B cell (primary cell): ENCODE measurements at regions of chr1 and their contacts with region 1.

Region 1: GRCh38 chr1:95723346-95723745 is 489.3 kb downstream of the RWDD3 start:
- DNase-seq: no peak
- ATAC-seq: no peak
- H3K4me3 ChIP-seq: no peak overlapping the region
- H3K4me3 Mint-ChIP-seq: no peak overlapping the region
- H3K27ac ChIP-seq: no peak overlapping the region
- H3K27ac Mint-ChIP-seq: no peak overlapping the region
- H3K4me1 ChIP-seq: no peaks in the 10 kb centered on the region
- H3K4me1 Mint-ChIP-seq: no peaks in the 10 kb centered on the region
- H3K27me3 ChIP-seq: no peaks in the 10 kb centered on the region
- H3K27me3 Mint-ChIP-seq: no peaks in the 10 kb centered on the region
- CTCF ChIP-seq: no peak

Region 2: DNA sequence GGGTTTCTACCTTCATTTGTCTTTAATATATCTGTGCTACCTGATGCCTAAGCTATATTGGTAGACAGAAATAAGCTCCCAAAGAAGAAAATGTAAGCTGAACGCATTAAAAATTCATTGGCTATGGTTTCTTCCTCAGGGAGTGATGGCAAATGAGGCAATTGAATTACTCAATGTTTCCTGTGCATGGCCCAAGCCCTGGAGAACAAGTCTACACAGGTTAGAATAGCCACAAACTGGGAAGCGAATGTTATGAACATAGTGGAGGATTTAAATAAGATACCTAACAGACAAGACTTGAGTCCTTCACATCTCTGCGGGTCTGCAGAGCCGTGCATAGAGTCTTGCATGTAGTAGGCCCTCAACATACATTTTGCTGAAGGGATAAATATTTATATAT is 139.0 kb before region 1 on chr1:
- CTCF ChIA-PET with region 1: no interaction called
- POLR2A ChIA-PET with region 1: no interaction called
- intact Hi-C with region 1: no loop called
- DNase-seq: no peak
- ATAC-seq: no peak
- H3K4me3 ChIP-seq: no peak overlapping the region
- H3K4me3 Mint-ChIP-seq: no peak overlapping the region
- H3K27ac ChIP-seq: no peak overlapping the region
- H3K27ac Mint-ChIP-seq: no peak overlapping the region
- H3K4me1 ChIP-seq: no peaks in the 10 kb centered on the region
- H3K4me1 Mint-ChIP-seq: no peaks in the 10 kb centered on the region
- H3K27me3 ChIP-seq: no peaks in the 10 kb centered on the region
- H3K27me3 Mint-ChIP-seq: no peaks in the 10 kb centered on the region
- CTCF ChIP-seq: no peak

Region 3: GRCh38 chr1:95679262-95679661 is 44.1 kb before region 1 on chr1:
- CTCF ChIA-PET with region 1: no interaction called
- POLR2A ChIA-PET with region 1: no interaction called
- intact Hi-C with region 1: loop called (anchors 2 kb)
- DNase-seq: no peak
- ATAC-seq: no peak
- H3K4me3 ChIP-seq: no peak overlapping the region
- H3K4me3 Mint-ChIP-seq: no peak overlapping the region
- H3K27ac ChIP-seq: no peak overlapping the region
- H3K27ac Mint-ChIP-seq: no peak overlapping the region
- H3K4me1 ChIP-seq: no peaks in the 10 kb centered on the region
- H3K4me1 Mint-ChIP-seq: no peaks in the 10 kb centered on the region
- H3K27me3 ChIP-seq: no peaks in the 10 kb centered on the region
- H3K27me3 Mint-ChIP-seq: no peaks in the 10 kb centered on the region
- CTCF ChIP-seq: no peak

Region 4: GRCh38 chr1:95699149-95699953 is 24.0 kb before region 1 on chr1:
- CTCF ChIA-PET with region 1: no interaction called
- POLR2A ChIA-PET with region 1: no interaction called
- intact Hi-C with region 1: no loop called
- DNase-seq: no peak
- ATAC-seq: no peak
- H3K4me3 ChIP-seq: no peak overlapping the region
- H3K4me3 Mint-ChIP-seq: no peak overlapping the region
- H3K27ac ChIP-seq: no peak overlapping the region
- H3K27ac Mint-ChIP-seq: no peak overlapping the region
- H3K4me1 ChIP-seq: no peaks in the 10 kb centered on the region
- H3K4me1 Mint-ChIP-seq: no peaks in the 10 kb centered on the region
- H3K27me3 ChIP-seq: no peaks in the 10 kb centered on the region
- H3K27me3 Mint-ChIP-seq: no peaks in the 10 kb centered on the region
- CTCF ChIP-seq: no peak